ENCODE measurements at regions of chr17 and their contacts with region 1.

Region 1: DNA sequence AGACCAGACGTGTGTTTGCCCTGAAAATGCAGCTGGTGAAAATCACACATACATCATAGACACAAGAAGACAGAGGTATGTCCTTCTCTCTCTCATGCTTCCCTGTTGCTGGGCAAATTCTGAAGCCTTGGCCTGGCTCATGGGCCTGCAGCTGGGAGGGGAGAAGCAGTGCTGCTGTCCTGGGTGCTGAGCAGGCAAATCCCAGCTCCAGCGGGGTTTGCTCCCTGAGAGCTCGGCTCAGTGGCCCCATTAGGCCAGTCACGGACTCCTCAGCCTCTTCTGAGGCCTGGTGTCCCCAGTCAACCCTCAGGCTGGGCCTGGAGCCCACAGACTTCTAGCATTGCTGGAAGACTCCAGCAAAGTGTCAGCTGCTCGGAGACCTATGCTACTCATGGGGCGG is 11.6 kb downstream of the RHBDL3 start:
- DNase-seq: no peak
- ATAC-seq: no peak
- H3K4me3 ChIP-seq: no peak overlapping the region
- H3K27ac ChIP-seq: no peak overlapping the region
- H3K4me1 ChIP-seq: peaks cover 6% of the 10 kb centered on the region; the same call in 1 of the 2 replicates
- H3K27me3 ChIP-seq: no peaks in the 10 kb centered on the region
- CTCF ChIP-seq: no peak

Region 2: GRCh38 chr17:32259586-32259985 is 17.7 kb before region 1 on chr17:
- CTCF ChIA-PET with region 1: no interaction called
- POLR2A ChIA-PET with region 1: no interaction called
- intact Hi-C with region 1: loop called (anchors 1 kb)
- DNase-seq: no peak
- ATAC-seq: 0 out of 2 replicates have a peak, but pooled peaks have one; percentile 37
- H3K4me3 ChIP-seq: no peak overlapping the region
- H3K27ac ChIP-seq: no peak overlapping the region
- H3K4me1 ChIP-seq: no peaks in the 10 kb centered on the region
- H3K27me3 ChIP-seq: peaks cover 11% of the 10 kb centered on the region
- CTCF ChIP-seq: no peak

Region 3: DNA sequence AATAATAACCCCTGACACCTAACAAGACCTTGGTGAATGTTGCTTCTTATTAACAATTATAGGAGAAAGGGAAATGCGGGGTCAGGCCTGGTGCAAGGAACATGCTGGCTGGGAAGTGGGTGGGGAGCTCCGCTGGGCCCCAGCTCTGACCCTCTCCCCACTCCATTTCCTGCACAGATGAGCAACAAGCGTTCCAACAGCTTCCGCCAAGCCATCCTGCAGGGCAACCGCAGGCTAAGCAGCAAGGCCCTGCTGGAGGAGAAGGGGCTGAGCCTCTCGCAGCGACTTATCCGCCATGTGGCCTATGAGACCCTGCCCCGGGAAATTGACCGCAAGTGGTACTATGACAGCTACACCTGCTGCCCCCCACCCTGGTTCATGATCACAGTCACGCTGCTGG is 11.3 kb after region 1 on chr17:
- CTCF ChIA-PET with region 1: no interaction called
- POLR2A ChIA-PET with region 1: no interaction called
- intact Hi-C with region 1: no loop called
- DNase-seq: no peak
- ATAC-seq: no peak
- H3K4me3 ChIP-seq: no peak overlapping the region
- H3K27ac ChIP-seq: no peak overlapping the region
- H3K4me1 ChIP-seq: no peaks in the 10 kb centered on the region
- H3K27me3 ChIP-seq: no peaks in the 10 kb centered on the region
- CTCF ChIP-seq: no peak